Right ventricle myocardium inferior (tissue), 1 donor: ENCODE measurements at regions of chr17 and their contacts with region 1.

Region 1: GRCh38 chr17:9814337-9814945 is 7.4 kb downstream of the GSG1L2 start:
- DNase-seq: no peak
- ATAC-seq: no peak

Region 2: DNA sequence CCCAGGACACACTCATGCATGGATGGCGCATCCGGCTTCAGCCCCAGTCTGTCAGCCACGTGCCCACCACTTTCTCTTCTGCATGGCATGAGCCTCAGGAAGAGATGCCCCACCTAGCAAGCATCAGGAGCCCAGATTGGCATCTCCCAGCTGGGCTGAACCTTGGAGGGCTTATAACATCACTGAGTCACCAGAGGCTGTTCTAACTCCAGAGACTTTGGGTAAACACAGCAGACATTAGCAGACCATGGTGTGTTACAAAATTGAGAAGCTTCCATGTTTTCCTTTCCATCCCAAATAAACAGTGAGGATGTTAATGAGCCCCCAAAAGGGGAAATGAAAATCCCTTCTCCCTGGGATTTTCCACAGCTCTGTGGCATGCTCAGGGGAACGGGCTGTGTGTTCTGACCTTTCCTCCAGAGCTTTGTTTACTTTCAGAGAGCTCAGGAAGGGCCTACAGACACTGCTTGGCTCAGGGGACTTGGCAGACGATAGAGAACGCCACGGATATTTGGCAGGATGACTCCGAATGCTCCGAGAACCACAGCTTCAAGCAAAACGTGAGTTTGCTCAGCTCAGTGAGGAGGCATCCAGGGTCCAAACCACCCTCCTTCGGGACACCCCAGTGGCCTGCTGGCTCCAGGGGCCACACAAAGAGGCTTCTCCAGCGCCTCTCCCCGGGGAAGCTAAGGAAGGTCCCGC is 27.8 kb after region 1 on chr17:
- intact Hi-C with region 1: loop called (anchors 2 kb)
- DNase-seq: no peak
- ATAC-seq: peak; percentile 87

Region 3: GRCh38 chr17:10033959-10034358 is 219.5 kb after region 1 on chr17:
- intact Hi-C with region 1: no loop called
- DNase-seq: no peak
- ATAC-seq: peak; percentile 17

Region 4: DNA sequence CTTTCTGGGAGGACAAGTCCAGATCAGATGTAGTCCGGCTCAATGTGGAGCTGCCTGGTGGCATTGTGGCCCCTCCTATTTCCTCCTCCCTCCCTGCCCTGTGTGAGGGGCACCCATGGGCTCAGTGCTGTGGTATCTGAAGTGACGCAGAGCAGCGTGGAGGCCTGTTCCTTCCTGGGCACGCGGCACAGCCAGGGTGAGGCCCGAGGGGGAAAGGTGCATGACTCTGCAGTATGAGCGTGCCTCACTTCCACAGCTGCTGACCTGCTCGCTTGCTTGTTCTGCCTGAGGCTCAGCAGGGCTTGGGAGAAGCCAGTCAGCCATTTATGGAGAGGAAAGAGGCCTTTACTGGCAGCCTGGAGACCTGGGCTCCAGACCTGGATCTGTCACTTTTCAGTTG is 977.7 kb after region 1 on chr17:
- intact Hi-C with region 1: no loop called
- DNase-seq: no peak
- ATAC-seq: peak; percentile 11